ENCODE measurements at regions of chr6 and their contacts with region 1.

Region 1: DNA sequence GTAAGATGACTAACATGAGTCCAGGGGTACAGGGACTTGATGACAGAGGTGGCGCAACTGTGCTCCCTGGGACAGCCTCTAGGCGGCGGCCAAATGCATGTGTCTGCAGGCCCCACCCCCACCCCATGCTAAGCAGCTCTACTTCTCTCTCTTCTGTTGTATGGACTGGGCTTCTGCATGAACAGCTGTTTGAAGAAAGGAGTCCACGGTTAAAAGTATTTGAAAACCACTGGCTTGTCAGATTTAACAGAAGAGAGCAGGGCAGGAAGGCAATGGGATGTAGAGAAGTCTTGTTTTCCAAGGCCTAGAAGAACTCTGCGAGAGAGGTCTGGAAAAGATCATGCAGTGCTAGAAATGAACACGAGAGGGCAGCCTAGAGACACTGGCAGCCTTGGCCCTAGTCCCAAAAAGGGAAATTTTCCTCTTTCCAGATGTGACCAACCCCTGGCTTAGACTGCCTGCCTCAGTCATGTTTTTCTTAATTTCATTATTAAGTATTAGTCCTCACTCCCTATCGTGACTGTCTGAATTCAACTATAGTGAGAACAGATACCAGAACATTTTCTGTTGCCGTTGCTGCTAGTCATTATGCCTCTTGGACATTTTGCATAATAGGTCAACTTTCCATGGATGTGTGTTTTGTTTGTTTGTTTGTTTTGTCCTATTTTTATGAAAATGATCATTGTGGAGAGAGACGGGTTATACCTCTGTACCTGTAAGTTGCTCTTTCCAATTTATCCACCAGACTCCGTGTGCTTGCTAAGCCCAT is 265.0 kb downstream of the ADGRG6 start:
- DNase-seq: peak; percentile 81
- H3K4me3 Mint-ChIP-seq: no peak overlapping the region
- H3K27ac Mint-ChIP-seq: no peak overlapping the region
- H3K4me1 Mint-ChIP-seq: peaks cover 80% of the 10 kb centered on the region
- H3K27me3 Mint-ChIP-seq: no peaks in the 10 kb centered on the region

Region 2: DNA sequence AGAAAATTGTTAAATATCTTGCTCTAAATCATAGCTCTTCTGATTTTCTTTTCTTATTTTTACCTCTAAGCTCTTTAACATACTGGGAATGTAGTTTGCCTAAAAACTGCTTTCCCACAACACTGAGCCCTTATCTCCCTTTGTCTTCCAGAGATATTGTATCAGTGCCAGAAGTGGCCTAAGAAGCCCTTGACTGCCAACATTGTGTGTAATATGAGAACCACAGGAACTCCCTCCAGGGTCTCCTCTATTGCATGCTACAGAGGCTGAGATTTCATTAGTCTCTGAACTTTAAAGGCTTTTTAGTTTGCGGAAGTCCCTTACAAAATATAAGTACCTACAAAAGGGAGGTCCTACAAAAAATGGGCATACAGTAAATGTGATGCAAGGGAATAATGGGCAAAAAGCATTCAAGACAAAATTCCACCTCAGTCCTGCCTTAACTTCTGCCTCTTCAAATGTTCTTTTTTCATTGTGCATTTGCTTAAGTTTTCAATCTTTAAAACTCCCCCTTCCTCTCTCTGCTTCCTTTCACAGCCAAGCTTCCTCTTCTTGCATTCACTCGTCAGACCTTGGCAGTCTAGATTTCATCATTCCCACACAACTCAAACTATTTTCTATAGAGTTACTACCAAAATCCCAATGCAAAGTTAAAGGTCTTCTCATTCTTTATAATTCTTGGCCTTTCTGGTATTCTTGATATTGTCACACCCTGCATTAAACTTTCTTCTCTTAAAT is 188.5 kb before region 1 on chr6:
- CTCF ChIA-PET with region 1: no interaction called
- intact Hi-C with region 1: no loop called
- DNase-seq: no peak
- H3K4me3 Mint-ChIP-seq: no peak overlapping the region
- H3K27ac Mint-ChIP-seq: no peak overlapping the region
- H3K4me1 Mint-ChIP-seq: no peaks in the 10 kb centered on the region
- H3K27me3 Mint-ChIP-seq: no peaks in the 10 kb centered on the region

Region 3: DNA sequence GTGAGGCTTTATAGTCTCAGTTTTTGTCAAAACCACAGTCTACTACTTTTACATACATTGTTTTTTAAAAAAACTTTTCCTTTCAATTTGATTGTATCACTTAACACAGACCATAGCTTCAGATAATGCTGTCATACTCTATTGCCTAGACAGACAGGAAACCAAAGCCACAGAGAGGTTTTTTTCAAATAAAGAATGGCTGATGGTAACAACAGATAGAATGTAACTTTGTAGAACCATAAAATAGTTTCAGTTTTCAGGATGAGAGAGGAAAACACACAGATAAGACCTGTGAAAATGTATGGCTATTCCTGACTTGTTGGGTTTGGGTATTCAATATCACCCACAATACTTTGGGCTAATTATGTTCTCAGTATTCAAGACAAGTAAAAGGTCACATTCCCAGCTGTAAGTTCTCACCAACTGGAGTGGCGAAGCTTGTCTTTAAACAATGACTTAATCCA is 171.0 kb before region 1 on chr6:
- CTCF ChIA-PET with region 1: no interaction called
- intact Hi-C with region 1: loop called (anchors 2 kb)
- DNase-seq: no peak
- H3K4me3 Mint-ChIP-seq: no peak overlapping the region
- H3K27ac Mint-ChIP-seq: no peak overlapping the region
- H3K4me1 Mint-ChIP-seq: peaks cover 33% of the 10 kb centered on the region
- H3K27me3 Mint-ChIP-seq: no peaks in the 10 kb centered on the region

Region 4: GRCh38 chr6:142551274-142551811 is 15.5 kb before region 1 on chr6:
- CTCF ChIA-PET with region 1: interaction called, 18 read pairs
- intact Hi-C with region 1: loop called (anchors 1 kb)
- DNase-seq: peak; percentile 86
- H3K4me3 Mint-ChIP-seq: peak overlapping the region; percentile 36
- H3K27ac Mint-ChIP-seq: no peak overlapping the region
- H3K4me1 Mint-ChIP-seq: peaks cover 27% of the 10 kb centered on the region
- H3K27me3 Mint-ChIP-seq: no peaks in the 10 kb centered on the region

Region 5: GRCh38 chr6:142773859-142774648 is 207.2 kb after region 1 on chr6:
- CTCF ChIA-PET with region 1: no interaction called
- intact Hi-C with region 1: loop called (anchors 5 kb)
- DNase-seq: peak; percentile 46
- H3K4me3 Mint-ChIP-seq: no peak overlapping the region
- H3K27ac Mint-ChIP-seq: peak overlapping the region; percentile 79
- H3K4me1 Mint-ChIP-seq: peaks cover 59% of the 10 kb centered on the region
- H3K27me3 Mint-ChIP-seq: no peaks in the 10 kb centered on the region

Region 6: DNA sequence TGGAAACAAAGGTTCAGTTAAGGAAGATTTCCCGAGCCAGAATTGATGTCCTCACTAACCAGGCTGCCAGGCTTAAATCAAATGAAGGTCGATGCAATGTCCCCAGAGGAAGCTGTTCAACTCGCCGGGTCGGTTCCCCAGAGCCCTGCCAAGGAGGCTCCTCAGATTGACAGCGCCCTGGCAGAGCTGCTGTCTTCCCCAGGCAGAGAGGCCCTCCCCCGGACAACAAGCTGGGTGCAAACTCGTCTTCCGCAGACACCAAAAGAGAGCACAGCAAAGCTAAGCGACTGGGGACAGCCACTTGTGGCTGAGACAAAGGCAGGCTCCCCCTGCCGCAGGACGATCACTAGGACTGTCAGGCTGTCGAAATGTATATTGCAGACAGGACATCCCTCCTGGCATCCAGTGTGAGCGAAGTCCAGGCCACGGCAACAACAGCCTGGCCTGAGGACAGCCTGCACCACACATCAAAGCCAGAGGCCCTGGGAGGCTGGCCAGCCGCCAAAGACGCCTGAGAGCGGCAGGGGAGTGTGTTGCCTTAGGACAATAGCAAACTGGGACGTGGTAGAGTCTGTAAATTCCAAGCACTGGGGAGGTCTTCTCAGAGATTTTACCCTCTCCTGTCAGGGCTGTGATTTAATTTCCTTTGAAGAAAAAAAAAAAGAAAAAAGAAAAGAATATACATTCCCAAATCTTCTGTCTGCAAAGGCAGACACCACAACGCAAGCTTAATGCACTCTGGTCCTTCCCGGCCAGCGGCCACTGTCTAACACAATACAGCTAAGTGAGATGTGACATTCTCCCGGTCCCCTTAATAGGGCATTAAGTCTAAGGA is 279.0 kb after region 1 on chr6:
- CTCF ChIA-PET with region 1: no interaction called
- intact Hi-C with region 1: loop called (anchors 1 kb)
- DNase-seq: peak; percentile 59
- H3K4me3 Mint-ChIP-seq: peak overlapping the region; percentile 66
- H3K27ac Mint-ChIP-seq: peak overlapping the region; percentile 89
- H3K4me1 Mint-ChIP-seq: peaks cover 95% of the 10 kb centered on the region
- H3K27me3 Mint-ChIP-seq: no peaks in the 10 kb centered on the region

Region 7: DNA sequence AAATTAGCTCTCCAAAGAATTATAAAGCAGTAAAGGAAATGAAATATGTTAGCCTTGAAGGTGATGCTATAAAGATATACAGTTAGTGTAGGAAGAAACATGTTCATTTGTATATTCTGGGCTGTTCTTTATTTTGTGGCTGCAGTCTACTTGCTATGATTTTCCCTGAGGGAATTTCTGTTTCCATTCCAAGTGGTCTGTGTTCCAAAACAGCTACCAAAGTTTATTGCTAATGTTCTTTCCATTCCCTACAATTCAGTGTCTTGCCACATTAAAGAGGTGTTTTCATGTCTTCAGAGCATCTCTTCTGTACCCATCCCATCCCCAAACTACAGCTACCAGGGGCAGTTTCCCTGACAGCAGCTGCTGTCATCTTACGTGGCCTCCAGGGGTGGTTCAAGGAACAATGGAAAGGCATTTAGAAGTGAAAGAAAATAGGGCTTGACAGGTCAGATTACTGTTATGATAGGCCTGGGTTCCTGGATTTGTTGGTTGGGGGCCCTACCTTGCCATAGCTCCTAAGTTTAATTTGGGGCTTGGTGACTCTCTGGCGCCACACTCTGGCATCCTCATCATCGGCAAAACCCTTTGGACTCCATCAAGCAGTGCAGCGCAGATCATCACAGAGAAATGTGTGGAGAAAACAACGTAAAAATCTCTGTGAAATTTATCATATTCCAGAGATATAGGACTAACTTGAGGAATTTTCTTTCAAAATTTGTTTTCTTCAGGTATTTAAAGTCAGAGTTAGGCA is 460.1 kb after region 1 on chr6:
- CTCF ChIA-PET with region 1: interaction called, 4 read pairs
- intact Hi-C with region 1: loop called (anchors 1 kb)
- DNase-seq: peak; percentile 76
- H3K4me3 Mint-ChIP-seq: no peak overlapping the region
- H3K27ac Mint-ChIP-seq: no peak overlapping the region
- H3K4me1 Mint-ChIP-seq: peaks cover 7% of the 10 kb centered on the region
- H3K27me3 Mint-ChIP-seq: no peaks in the 10 kb centered on the region

Region 8: GRCh38 chr6:143510991-143511891 is 944.4 kb after region 1 on chr6 and contains the start of gene FUCA2:
- CTCF ChIA-PET with region 1: no interaction called
- intact Hi-C with region 1: loop called (anchors 5 kb)
- DNase-seq: peak; percentile 82
- H3K4me3 Mint-ChIP-seq: peak within 1 kb of the TSS; percentile 85
- H3K27ac Mint-ChIP-seq: peak within 1 kb of the TSS; percentile 85
- H3K4me1 Mint-ChIP-seq: peaks cover 15% of the 10 kb centered on the region
- H3K27me3 Mint-ChIP-seq: no peaks in the 10 kb centered on the region
- total RNA-seq, gene FUCA2: 7.7 to 8.2 TPM

Measured in activated naive CD4-positive, alpha-beta T cell treated with anti-CD3 and anti-CD28 coated beads for 36 hours (primary cell).